Astrocyte of the cerebellum (primary cell): ENCODE measurements at regions of chr1 and their contacts with region 1.

Region 1: GRCh38 chr1:34721646-34722355 is 33.0 kb upstream of the GJB5 start:
- DNase-seq: no peak
- H3K4me3 ChIP-seq: no peak overlapping the region
- CTCF ChIP-seq: no peak

Region 2: GRCh38 chr1:34597877-34598514 is 123.8 kb before region 1 on chr1:
- in situ Hi-C with region 1: no loop called
- DNase-seq: peak; percentile 23
- H3K4me3 ChIP-seq: no peak overlapping the region
- CTCF ChIP-seq: peak; percentile 96

Region 3: DNA sequence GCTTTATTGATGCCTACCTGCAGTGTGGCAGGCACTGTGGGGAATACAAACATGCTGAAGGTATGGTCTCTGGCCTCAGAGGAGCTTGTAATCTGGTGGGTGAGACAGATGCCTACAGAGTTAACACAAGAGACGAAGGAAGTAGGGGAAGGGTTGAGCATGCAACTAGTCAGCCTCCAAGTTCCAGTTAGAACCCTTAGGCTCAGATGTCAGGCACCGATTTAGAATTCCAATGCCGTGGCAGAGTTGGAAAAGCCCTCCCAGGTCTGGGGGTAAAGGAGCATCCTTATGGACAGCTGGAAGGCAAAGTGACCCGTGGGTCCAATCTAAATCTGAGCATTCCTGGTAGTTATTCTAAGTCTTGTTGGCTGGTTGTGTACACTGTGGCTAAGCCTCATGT is 99.9 kb before region 1 on chr1:
- in situ Hi-C with region 1: loop called (anchors 5 kb)
- DNase-seq: no peak
- H3K4me3 ChIP-seq: no peak overlapping the region
- CTCF ChIP-seq: no peak